ENCODE measurements at regions of chr18 and their contacts with region 1.

Region 1: DNA sequence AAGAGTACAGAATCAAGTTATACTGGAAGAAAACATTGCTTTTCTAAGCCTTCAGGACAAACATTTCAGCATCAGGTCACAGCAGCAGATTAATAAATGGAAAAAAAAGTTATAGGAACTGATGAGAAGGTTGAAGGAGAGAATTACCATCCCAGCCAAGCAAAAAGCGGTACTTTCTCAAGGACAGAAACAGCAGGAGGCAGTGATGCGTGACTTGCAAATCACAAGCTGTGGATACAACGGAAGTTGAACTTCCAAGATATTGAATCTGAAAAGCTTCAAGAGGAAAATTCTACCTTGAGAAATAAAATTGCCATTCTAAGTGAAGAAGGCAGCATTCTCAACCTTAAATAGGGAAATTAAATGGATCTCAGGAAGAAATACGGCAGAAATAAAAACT is 18.5 kb upstream of the SERPINB12 start:
- DNase-seq: no peak
- H3K4me3 ChIP-seq: no peak overlapping the region
- H3K4me3 Mint-ChIP-seq: no peak overlapping the region
- H3K27ac ChIP-seq: no peak overlapping the region
- H3K27ac Mint-ChIP-seq: no peak overlapping the region
- H3K4me1 ChIP-seq: no peaks in the 10 kb centered on the region
- H3K4me1 Mint-ChIP-seq: no peaks in the 10 kb centered on the region
- H3K27me3 ChIP-seq: no peaks in the 10 kb centered on the region
- H3K27me3 Mint-ChIP-seq: peaks cover 8 to 10% of the 10 kb centered on the region in 2 donors

Region 2: GRCh38 chr18:63292831-63293683 is 230.6 kb before region 1 on chr18:
- CTCF ChIA-PET with region 1: no interaction called
- POLR2A ChIA-PET with region 1: no interaction called
- intact Hi-C with region 1: no loop called
- DNase-seq: peak in 1 of 5 donors; percentile 59
- H3K4me3 ChIP-seq: peak overlapping the region in 1 of 2 donors; percentile 20
- H3K4me3 Mint-ChIP-seq: peak overlapping the region in 5 of 8 donors; percentile 28 to 86 (median 76)
- H3K27ac ChIP-seq: peak overlapping the region; percentile 27
- H3K27ac Mint-ChIP-seq: peak overlapping the region in 6 of 7 donors; percentile 65 to 90 (median 84)
- H3K4me1 ChIP-seq: peaks cover 82% of the 10 kb centered on the region
- H3K4me1 Mint-ChIP-seq: peaks cover 11 to 56% (median 40%) of the 10 kb centered on the region in 4 donors
- H3K27me3 ChIP-seq: no peaks in the 10 kb centered on the region
- H3K27me3 Mint-ChIP-seq: no peaks in the 10 kb centered on the region

Region 3: DNA sequence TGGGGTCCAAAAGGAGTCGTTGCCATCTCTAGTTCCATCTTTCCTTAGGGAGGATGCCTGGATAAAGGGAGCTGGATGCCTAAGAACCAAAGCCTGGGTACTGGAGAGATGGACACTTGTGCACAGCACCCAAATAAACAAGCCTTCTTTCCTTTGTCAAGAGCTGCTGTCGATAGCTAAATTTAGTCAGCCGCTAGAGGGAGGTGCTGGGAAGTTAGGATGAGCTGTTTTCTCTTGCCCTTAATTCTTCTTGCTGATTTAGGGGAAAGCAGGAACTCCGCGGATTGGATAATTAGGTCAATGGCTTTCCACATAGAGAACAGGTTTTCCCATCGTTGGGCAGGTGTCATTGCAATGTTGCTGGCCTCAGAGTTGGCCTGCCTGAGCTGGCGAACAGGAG is 12.4 kb before region 1 on chr18:
- CTCF ChIA-PET with region 1: interaction called, 41 read pairs
- POLR2A ChIA-PET with region 1: no interaction called
- intact Hi-C with region 1: no loop called
- DNase-seq: no peak
- H3K4me3 ChIP-seq: no peak overlapping the region
- H3K4me3 Mint-ChIP-seq: no peak overlapping the region
- H3K27ac ChIP-seq: no peak overlapping the region
- H3K27ac Mint-ChIP-seq: no peak overlapping the region
- H3K4me1 ChIP-seq: no peaks in the 10 kb centered on the region
- H3K4me1 Mint-ChIP-seq: no peaks in the 10 kb centered on the region
- H3K27me3 ChIP-seq: peaks cover 3% of the 10 kb centered on the region
- H3K27me3 Mint-ChIP-seq: peaks cover 19 to 33% of the 10 kb centered on the region in 2 donors

Region 4: GRCh38 chr18:63590373-63590772 is 66.7 kb after region 1 on chr18:
- CTCF ChIA-PET with region 1: no interaction called
- POLR2A ChIA-PET with region 1: no interaction called
- intact Hi-C with region 1: no loop called
- DNase-seq: no peak
- H3K4me3 ChIP-seq: no peak overlapping the region
- H3K4me3 Mint-ChIP-seq: no peak overlapping the region
- H3K27ac ChIP-seq: no peak overlapping the region
- H3K27ac Mint-ChIP-seq: no peak overlapping the region
- H3K4me1 ChIP-seq: no peaks in the 10 kb centered on the region
- H3K4me1 Mint-ChIP-seq: no peaks in the 10 kb centered on the region
- H3K27me3 ChIP-seq: no peaks in the 10 kb centered on the region
- H3K27me3 Mint-ChIP-seq: peaks cover 9 to 16% of the 10 kb centered on the region in 2 donors

Region 5: GRCh38 chr18:63783394-63783793 is 259.7 kb after region 1 on chr18:
- CTCF ChIA-PET with region 1: no interaction called
- POLR2A ChIA-PET with region 1: no interaction called
- intact Hi-C with region 1: no loop called
- DNase-seq: no peak
- H3K4me3 ChIP-seq: no peak overlapping the region
- H3K4me3 Mint-ChIP-seq: no peak overlapping the region
- H3K27ac ChIP-seq: no peak overlapping the region
- H3K27ac Mint-ChIP-seq: no peak overlapping the region
- H3K4me1 ChIP-seq: no peaks in the 10 kb centered on the region
- H3K4me1 Mint-ChIP-seq: no peaks in the 10 kb centered on the region
- H3K27me3 ChIP-seq: no peaks in the 10 kb centered on the region
- H3K27me3 Mint-ChIP-seq: peaks cover 0 to 3% of the 10 kb centered on the region in 2 donors

Measured in CD4-positive, alpha-beta memory T cell (primary cell).